Activated T-helper 2 cell treated with anti-CD3 and anti-CD28 coated beads, Interferon-gamma antibody, Interleukin-2, Interleukin-4, amounts not matched to agents 10 μg/mL and 5 μg/mL and 100 μg/mL, durations not matched to agents 14 hours and 24 hours and 36 hours (primary cell): ENCODE measurements at regions of chr12 and their contacts with region 1.

Region 1: GRCh38 chr12:69070319-69071090 is 137.5 kb upstream of the CPM start:
- DNase-seq: peak; percentile 34
- H3K4me3 Mint-ChIP-seq: no peak overlapping the region
- H3K27ac Mint-ChIP-seq: no peak overlapping the region
- H3K4me1 Mint-ChIP-seq: peaks cover 17% of the 10 kb centered on the region
- H3K27me3 Mint-ChIP-seq: peaks cover 15% of the 10 kb centered on the region

Region 2: DNA sequence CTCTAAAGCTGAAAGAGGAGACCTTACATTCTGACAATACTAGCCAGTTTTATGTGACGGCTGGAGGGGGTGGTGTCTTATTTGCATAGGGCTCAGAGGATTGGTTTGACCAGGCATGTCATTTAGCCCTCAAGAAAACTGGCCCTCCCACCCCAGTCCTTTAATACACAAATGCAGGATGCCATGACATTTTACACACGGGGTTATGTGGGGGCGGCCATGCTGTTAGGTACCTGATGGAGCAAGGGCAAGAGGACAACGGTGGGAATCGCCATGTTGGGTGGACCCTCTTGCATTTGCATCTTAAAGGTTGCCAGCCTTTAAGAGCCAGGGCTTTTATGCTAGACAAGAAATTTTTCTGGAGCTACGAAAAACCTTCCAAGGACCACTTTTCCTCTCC is 239.2 kb before region 1 on chr12:
- intact Hi-C with region 1: loop called (anchors 1 kb)
- DNase-seq: no peak
- H3K4me3 Mint-ChIP-seq: no peak overlapping the region
- H3K27ac Mint-ChIP-seq: no peak overlapping the region
- H3K4me1 Mint-ChIP-seq: peaks cover 13% of the 10 kb centered on the region
- H3K27me3 Mint-ChIP-seq: no peaks in the 10 kb centered on the region

Region 3: DNA sequence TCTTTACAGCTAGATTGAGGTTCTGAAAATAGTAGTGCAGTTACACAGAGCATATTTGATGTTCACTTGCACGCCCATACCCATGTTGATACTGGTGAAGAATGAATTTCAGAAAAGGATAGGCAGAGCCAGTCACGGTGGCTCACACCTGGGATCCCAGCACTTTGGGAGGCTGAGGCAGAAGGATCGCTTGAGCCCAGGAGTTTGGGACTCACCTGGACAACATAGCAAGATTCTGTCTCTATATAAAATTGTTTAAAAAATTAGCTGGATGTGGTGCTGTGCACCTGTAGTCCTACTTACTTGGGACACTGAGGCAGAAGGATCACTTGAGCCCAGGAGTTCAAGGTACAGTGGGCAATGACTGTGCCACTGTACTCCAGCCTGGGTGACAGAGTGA is 205.9 kb before region 1 on chr12:
- intact Hi-C with region 1: loop called (anchors 1 kb)
- DNase-seq: no peak
- H3K4me3 Mint-ChIP-seq: no peak overlapping the region
- H3K27ac Mint-ChIP-seq: no peak overlapping the region
- H3K4me1 Mint-ChIP-seq: peaks cover 13% of the 10 kb centered on the region
- H3K27me3 Mint-ChIP-seq: no peaks in the 10 kb centered on the region

Region 4: GRCh38 chr12:69059483-69060457 is 10.7 kb before region 1 on chr12:
- intact Hi-C with region 1: loop called (anchors 1 kb)
- DNase-seq: no peak
- H3K4me3 Mint-ChIP-seq: no peak overlapping the region
- H3K27ac Mint-ChIP-seq: peak overlapping the region; percentile 36
- H3K4me1 Mint-ChIP-seq: peaks cover 27% of the 10 kb centered on the region
- H3K27me3 Mint-ChIP-seq: no peaks in the 10 kb centered on the region